Panc1 (cell line): ENCODE measurements at regions of chr1 and their contacts with region 1.

Region 1: DNA sequence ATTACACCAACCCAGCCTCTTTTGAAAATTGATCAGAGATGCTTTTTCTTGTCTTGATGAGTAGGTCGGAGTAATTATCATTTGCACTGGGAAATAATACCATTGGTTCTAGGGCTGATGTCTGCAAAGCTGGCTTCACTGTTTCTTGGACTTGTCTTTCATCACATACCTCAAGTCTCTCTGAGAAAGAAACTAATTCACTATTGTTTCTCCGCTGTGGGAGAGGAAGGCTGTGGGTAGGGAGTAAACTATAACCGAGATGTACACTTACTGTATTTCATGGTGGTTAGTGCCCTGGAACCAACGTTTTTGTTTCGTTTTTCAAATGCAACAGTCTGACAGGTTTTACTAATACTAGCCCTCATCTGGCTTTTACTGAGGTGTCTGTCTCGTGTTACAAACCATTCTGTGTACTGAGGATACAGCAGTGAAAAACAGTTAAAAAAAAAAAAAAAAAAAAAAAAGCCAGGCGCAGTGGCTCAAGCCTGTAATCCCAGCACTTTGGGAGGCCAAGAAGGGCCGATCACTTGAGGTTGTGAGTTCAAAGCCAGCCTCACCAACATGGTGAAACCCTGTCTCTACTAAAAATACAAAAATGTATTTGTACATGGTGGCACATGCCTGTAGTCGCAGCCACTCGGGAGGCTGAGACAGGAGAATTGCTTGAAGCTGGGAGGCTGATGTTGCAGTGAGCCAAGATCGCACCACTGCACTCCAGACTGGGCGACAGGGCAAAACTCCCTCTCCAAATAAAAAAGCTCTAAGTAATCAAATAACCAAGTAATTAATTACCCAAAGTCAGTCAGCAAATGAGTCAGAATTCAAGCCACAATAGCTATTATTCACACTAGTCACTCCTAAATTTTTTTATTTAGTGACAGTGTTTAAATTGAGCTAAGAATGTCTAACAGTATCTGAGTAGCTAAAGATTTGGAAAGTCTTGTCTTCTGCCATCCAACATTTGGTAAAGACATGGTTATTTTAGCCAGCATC is 23.3 kb downstream of the TOMM20 start:
- DNase-seq: no peak
- ATAC-seq: peak; percentile 51
- H3K4me3 ChIP-seq: peak overlapping the region in 1 of 2 experiments; percentile 57; a peak in 3 of 4 replicates
- H3K27ac ChIP-seq: peak overlapping the region; percentile 85
- H3K4me1 ChIP-seq: peaks cover 23% of the 10 kb centered on the region
- H3K27me3 ChIP-seq: no peaks in the 10 kb centered on the region
- CTCF ChIP-seq: no peak

Region 2: GRCh38 chr1:234538930-234539649 is 566.3 kb before region 1 on chr1:
- CTCF ChIA-PET with region 1: no interaction called
- POLR2A ChIA-PET with region 1: interaction called, 11 read pairs
- in situ Hi-C with region 1: no loop called
- intact Hi-C with region 1: no loop called
- DNase-seq: no peak
- ATAC-seq: no peak
- H3K4me3 ChIP-seq: no peak overlapping the region
- H3K27ac ChIP-seq: no peak overlapping the region
- H3K4me1 ChIP-seq: peaks cover 3% of the 10 kb centered on the region; the same call in 1 of the 2 replicates
- H3K27me3 ChIP-seq: no peaks in the 10 kb centered on the region
- CTCF ChIP-seq: no peak

Region 3: DNA sequence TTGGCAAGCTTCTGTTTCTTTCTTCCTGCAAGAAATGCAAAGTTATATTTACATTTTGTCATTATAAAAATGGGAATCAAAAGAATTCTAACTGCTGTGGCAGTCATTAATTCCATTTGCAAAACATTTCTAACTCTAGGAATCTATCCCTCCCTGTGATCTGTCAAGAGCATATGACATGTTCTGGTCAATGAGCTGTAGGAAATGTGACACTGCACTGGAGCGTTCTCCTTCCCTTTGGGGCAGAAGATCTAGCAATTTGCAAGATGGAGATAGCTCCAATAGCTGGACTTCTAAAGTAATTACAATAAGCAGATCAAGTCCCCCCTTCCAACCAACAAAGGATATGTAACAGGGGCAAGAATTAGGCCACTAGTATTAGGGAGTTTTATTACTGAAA is 17.0 kb after region 1 on chr1:
- CTCF ChIA-PET with region 1: no interaction called
- POLR2A ChIA-PET with region 1: no interaction called
- in situ Hi-C with region 1: no loop called
- intact Hi-C with region 1: no loop called
- DNase-seq: no peak
- ATAC-seq: no peak
- H3K4me3 ChIP-seq: no peak overlapping the region
- H3K27ac ChIP-seq: no peak overlapping the region
- H3K4me1 ChIP-seq: peaks cover 6% of the 10 kb centered on the region
- H3K27me3 ChIP-seq: no peaks in the 10 kb centered on the region
- CTCF ChIP-seq: no peak

Region 4: GRCh38 chr1:235147269-235147668 is 41.9 kb after region 1 on chr1:
- CTCF ChIA-PET with region 1: no interaction called
- POLR2A ChIA-PET with region 1: interaction called, 29 read pairs
- in situ Hi-C with region 1: no loop called
- intact Hi-C with region 1: no loop called
- DNase-seq: no peak
- ATAC-seq: no peak
- H3K4me3 ChIP-seq: no peak overlapping the region
- H3K27ac ChIP-seq: no peak overlapping the region
- H3K4me1 ChIP-seq: no peaks in the 10 kb centered on the region
- H3K27me3 ChIP-seq: no peaks in the 10 kb centered on the region
- CTCF ChIP-seq: no peak

Region 5: GRCh38 chr1:235442788-235443429 is 337.6 kb after region 1 on chr1:
- CTCF ChIA-PET with region 1: interaction called, 12 read pairs
- POLR2A ChIA-PET with region 1: no interaction called
- in situ Hi-C with region 1: no loop called
- intact Hi-C with region 1: no loop called
- DNase-seq: no peak
- ATAC-seq: no peak
- H3K4me3 ChIP-seq: no peak overlapping the region
- H3K27ac ChIP-seq: peak overlapping the region; percentile 40; the same call in 1 of the 2 replicates
- H3K4me1 ChIP-seq: no peaks in the 10 kb centered on the region
- H3K27me3 ChIP-seq: no peaks in the 10 kb centered on the region
- CTCF ChIP-seq: no peak

Region 6: GRCh38 chr1:236489710-236490377 is 1384.5 kb after region 1 on chr1:
- CTCF ChIA-PET with region 1: no interaction called
- POLR2A ChIA-PET with region 1: no interaction called
- in situ Hi-C with region 1: no loop called
- intact Hi-C with region 1: no loop called
- DNase-seq: peak; percentile 24
- ATAC-seq: peak; percentile 77
- H3K4me3 ChIP-seq: no peak overlapping the region
- H3K27ac ChIP-seq: peak overlapping the region; percentile 89
- H3K4me1 ChIP-seq: peaks cover 36% of the 10 kb centered on the region
- H3K27me3 ChIP-seq: no peaks in the 10 kb centered on the region
- CTCF ChIP-seq: peak; percentile 71